Endothelial cell of umbilical vein (primary cell): ENCODE measurements at regions of chr15 and their contacts with region 1.

Region 1: GRCh38 chr15:90869601-90870353 is 1.4 kb downstream of the FURIN start:
- DNase-seq: peak; percentile 95
- H3K4me3 ChIP-seq: peak overlapping the region in 1 of 3 experiments; percentile 59
- H3K27ac ChIP-seq: peak overlapping the region; percentile 89
- H3K4me1 ChIP-seq: peaks cover 42% of the 10 kb centered on the region
- H3K27me3 ChIP-seq: no peaks in the 10 kb centered on the region
- CTCF ChIP-seq: no peak
- POLR2A ChIP-seq: peak; percentile 80

Region 2: DNA sequence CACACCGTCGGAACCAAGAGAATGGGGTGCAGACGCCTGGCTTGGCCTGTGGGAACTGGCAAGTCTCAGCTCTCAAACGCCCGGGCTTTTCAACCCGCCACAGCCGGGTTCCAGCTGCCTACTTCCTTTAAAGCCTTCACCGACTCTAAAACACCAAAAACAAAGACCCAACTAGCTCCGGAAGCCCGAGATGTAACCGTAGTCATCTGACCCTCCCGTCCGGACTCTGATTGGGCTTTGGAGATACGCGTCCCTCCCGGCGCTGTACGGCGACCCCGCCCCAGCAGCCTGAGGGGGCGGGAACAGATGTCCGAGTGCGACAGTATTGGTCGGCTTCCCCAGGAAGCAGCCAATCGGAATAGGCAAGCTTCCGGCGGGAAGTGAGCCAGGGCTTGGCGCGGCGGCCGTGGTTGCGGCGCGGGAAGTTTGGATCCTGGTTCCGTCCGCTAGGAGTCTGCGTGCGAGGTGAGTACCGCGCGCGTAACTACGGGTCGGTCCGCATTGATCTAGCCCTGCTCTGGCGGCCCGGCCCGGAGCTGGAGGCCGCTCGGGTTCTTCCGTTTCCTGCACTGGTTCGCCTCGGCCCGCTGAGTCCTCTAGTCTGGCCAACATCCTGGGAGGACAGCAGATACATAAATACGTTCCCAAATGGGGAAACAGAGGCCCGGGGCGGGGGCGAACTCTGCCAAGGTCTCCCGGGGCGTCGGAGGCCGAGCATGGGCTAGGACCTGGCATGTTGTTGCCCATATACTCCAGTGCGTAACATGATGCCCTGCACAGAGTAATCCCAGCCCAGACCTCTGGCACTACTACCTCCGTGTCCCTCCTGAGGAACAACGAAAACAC is 152.6 kb before region 1 on chr15 and contains the start of gene BLM:
- CTCF ChIA-PET with region 1: interaction called, 3 read pairs
- POLR2A ChIA-PET with region 1: no interaction called
- dilution Hi-C with region 1: no loop called
- intact Hi-C with region 1: loop called (anchors 1 kb)
- DNase-seq: peak; percentile 99
- H3K4me3 ChIP-seq: peak within 1 kb of the TSS; percentile 63 to 93 (median 79)
- H3K27ac ChIP-seq: peak within 1 kb of the TSS; percentile 90
- H3K4me1 ChIP-seq: peaks cover 15% of the 10 kb centered on the region
- H3K27me3 ChIP-seq: no peaks in the 10 kb centered on the region
- CTCF ChIP-seq: peak in 1 of 2 donors; percentile 34
- POLR2A ChIP-seq: peak; percentile 90
- total RNA-seq, gene BLM: 17.3 and 18.6 TPM in 2 replicates